GM12878 (cell line): ENCODE measurements at regions of chr1 and their contacts with region 1.

Region 1: DNA sequence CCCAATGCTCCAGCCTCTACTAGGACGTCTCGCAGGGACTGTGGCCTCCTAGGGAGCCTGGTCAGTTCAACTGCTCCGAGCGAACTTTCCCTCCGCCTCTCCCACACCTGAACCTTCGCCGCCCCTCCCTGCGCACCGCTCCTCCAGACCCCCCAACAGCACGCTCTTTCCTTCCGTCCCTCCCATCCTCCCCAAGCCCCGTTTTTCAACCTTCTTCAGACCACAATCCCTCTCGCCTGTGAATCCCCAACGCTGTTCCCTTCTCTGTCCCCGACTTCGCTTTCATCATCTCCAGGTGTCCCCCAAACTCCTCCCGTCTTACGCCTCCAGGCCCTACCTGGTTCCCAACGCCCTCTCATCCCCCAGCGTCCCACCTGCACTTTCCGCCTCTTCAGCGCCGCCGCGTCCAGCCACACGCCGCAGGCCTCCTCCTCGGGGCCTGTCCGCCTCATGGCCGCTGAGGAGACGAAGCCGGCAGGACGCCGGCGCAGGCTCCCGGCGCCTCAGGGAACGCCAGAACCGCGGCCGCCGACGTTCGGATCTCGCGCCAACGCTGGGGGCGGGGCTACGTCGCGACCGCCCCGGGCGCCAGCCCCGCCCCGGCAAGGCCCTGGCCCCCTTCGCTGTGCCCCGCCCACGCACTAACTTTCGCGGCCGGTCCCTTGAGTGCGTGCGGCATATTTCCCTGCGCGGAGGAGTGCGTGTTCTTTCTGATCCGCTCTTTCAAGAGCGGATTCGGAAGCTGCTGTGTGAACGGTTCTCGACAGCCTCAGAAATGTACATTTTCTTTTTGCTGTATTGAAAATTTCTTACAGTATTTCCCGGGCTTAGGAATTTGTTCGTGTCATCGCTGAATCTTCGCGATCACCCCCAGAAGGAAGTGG is at the start of gene AUNIP:
- DNase-seq: peak; percentile 56
- ATAC-seq: peak; percentile 92
- H3K4me3 ChIP-seq: peak within 1 kb of the TSS; percentile 88
- H3K27ac ChIP-seq: peak within 1 kb of the TSS; percentile 82
- H3K4me1 ChIP-seq: peaks cover 8% of the 10 kb centered on the region; the same call in 1 of the 2 replicates
- H3K27me3 ChIP-seq: no peaks in the 10 kb centered on the region
- CTCF ChIP-seq: no peak
- EP300 ChIP-seq: no peak
- POLR2A ChIP-seq: peak; percentile 85
- RAD21 ChIP-seq: no peak
- polyA plus RNA-seq, gene AUNIP: 3.9 to 6.9 TPM

Region 2: GRCh38 chr1:24930204-24931145 is 928.7 kb before region 1 on chr1 and contains the start of gene RUNX3:
- CTCF ChIA-PET with region 1: no interaction called
- POLR2A ChIA-PET with region 1: no interaction called
- RAD21 ChIA-PET with region 1: no interaction called
- SMC1A ChIA-PET with region 1: no interaction called
- in situ Hi-C with region 1: no loop called
- intact Hi-C with region 1: no loop called
- DNase-seq: peak; percentile 76
- ATAC-seq: peak; percentile 77
- H3K4me3 ChIP-seq: peak within 1 kb of the TSS; percentile 99
- H3K27ac ChIP-seq: peak within 1 kb of the TSS; percentile 89
- H3K4me1 ChIP-seq: peaks cover 40% of the 10 kb centered on the region
- H3K27me3 ChIP-seq: no peaks in the 10 kb centered on the region
- CTCF ChIP-seq: peak; percentile 14 to 45 (median 35); a peak in 3 of 6 replicates
- EP300 ChIP-seq: peak in 1 of 2 experiments; percentile 39; a peak in 1 of 4 replicates
- POLR2A ChIP-seq: peak; percentile 11; the same call in 1 of the 2 replicates
- RAD21 ChIP-seq: no peak
- polyA plus RNA-seq, gene RUNX3: 21.6 to 26.3 TPM

Region 3: DNA sequence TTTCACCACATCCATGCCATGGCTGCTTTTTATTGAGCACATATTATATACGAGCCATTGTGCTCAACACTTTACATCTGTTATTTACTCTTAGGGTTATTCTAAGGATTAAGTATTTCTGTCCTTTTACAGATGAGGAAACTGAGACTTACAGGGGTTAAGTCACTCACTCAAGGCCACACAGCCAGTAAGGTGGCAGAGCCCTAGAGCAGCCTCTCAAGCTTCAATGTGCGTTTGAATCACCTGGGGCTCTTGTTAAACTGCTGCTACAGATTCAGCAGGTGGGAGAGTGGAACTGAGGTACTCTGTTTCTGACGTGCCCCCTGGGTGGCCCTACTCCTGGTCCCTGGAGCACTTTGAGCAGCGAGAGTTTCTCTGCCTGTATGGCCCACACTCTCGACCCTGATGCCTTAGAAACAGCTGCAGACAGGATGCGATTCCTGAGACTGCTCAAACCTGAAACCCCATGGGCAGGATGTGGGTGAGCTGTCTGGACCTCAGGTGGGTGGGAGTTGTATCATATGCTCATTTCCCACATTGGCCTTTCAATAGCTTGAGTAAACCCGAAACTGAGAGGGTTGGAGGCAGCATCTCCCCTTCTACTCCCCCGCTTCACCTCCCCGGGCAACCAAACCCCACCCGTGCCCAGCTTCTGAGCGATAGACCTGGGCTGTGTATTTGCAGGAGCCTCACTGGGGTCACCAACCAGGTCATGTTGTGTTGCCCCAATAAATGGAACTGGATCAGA is 183.2 kb before region 1 on chr1:
- CTCF ChIA-PET with region 1: no interaction called
- POLR2A ChIA-PET with region 1: no interaction called
- RAD21 ChIA-PET with region 1: no interaction called
- SMC1A ChIA-PET with region 1: no interaction called
- in situ Hi-C with region 1: no loop called
- intact Hi-C with region 1: no loop called
- DNase-seq: peak; percentile 93
- ATAC-seq: peak; percentile 98
- H3K4me3 ChIP-seq: no peak overlapping the region
- H3K27ac ChIP-seq: no peak overlapping the region
- H3K4me1 ChIP-seq: peaks cover 21% of the 10 kb centered on the region
- H3K27me3 ChIP-seq: peaks cover 3 to 15% of the 10 kb centered on the region in 2 experiments
- CTCF ChIP-seq: no peak
- EP300 ChIP-seq: peak; percentile 93 to 97
- POLR2A ChIP-seq: no peak
- RAD21 ChIP-seq: no peak

Region 4: DNA sequence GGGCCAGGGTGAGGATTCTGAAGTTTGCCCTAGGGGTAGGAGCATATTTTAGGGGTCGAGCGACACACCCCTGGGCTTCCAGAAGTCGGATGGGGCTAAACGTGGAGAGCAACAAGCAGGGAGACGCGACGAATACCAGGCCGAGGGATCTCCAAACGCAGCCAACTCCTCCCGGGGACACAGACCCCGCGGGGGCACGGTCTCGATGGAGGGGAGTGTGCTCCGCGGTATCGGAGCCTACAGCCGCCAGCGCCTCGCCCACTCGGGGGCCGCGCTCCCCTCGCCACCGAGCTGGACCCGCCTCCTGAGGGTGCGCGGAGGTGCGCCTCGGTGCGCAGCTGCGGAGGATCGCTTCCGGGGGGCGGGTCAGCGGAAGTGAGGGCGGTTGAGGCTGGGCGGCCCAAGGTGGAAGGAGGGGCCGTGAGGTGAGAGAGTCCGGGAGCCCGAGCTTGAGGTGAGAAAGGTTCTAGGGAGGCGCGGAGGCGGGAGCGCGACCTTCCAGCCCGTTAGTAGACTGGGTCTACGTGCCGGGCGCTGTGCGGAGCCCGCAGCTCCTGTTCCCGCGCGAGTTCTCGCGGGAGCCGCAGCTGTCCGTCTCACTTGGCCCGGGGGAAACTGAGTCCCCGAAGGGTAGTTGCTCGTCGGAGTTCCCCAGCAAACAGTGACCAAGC is 39.4 kb before region 1 on chr1 and contains the start of gene MTFR1L:
- CTCF ChIA-PET with region 1: interaction called, 3 read pairs
- POLR2A ChIA-PET with region 1: no interaction called
- RAD21 ChIA-PET with region 1: no interaction called
- SMC1A ChIA-PET with region 1: no interaction called
- in situ Hi-C with region 1: no loop called
- intact Hi-C with region 1: loop called (anchors 5 kb)
- DNase-seq: peak; percentile 66
- ATAC-seq: peak; percentile 95
- H3K4me3 ChIP-seq: peak within 1 kb of the TSS; percentile 83
- H3K27ac ChIP-seq: peak within 1 kb of the TSS; percentile 73
- H3K4me1 ChIP-seq: peaks cover 15% of the 10 kb centered on the region
- H3K27me3 ChIP-seq: no peaks in the 10 kb centered on the region
- CTCF ChIP-seq: no peak
- EP300 ChIP-seq: no peak
- POLR2A ChIP-seq: peak; percentile 89
- RAD21 ChIP-seq: no peak
- polyA plus RNA-seq, gene MTFR1L: 26.7 to 30.0 TPM

Region 5: GRCh38 chr1:25844536-25845337 is 14.4 kb before region 1 on chr1:
- CTCF ChIA-PET with region 1: interaction called, 10 read pairs
- POLR2A ChIA-PET with region 1: interaction called, 7 read pairs
- RAD21 ChIA-PET with region 1: no interaction called
- SMC1A ChIA-PET with region 1: interaction called, 8 read pairs
- in situ Hi-C with region 1: no loop called
- intact Hi-C with region 1: no loop called
- DNase-seq: no peak
- ATAC-seq: peak; percentile 95
- H3K4me3 ChIP-seq: no peak overlapping the region
- H3K27ac ChIP-seq: peak overlapping the region; percentile 29
- H3K4me1 ChIP-seq: peaks cover 8% of the 10 kb centered on the region; the same call in 1 of the 2 replicates
- H3K27me3 ChIP-seq: no peaks in the 10 kb centered on the region
- CTCF ChIP-seq: no peak
- EP300 ChIP-seq: no peak
- POLR2A ChIP-seq: no peak
- RAD21 ChIP-seq: no peak

Region 6: DNA sequence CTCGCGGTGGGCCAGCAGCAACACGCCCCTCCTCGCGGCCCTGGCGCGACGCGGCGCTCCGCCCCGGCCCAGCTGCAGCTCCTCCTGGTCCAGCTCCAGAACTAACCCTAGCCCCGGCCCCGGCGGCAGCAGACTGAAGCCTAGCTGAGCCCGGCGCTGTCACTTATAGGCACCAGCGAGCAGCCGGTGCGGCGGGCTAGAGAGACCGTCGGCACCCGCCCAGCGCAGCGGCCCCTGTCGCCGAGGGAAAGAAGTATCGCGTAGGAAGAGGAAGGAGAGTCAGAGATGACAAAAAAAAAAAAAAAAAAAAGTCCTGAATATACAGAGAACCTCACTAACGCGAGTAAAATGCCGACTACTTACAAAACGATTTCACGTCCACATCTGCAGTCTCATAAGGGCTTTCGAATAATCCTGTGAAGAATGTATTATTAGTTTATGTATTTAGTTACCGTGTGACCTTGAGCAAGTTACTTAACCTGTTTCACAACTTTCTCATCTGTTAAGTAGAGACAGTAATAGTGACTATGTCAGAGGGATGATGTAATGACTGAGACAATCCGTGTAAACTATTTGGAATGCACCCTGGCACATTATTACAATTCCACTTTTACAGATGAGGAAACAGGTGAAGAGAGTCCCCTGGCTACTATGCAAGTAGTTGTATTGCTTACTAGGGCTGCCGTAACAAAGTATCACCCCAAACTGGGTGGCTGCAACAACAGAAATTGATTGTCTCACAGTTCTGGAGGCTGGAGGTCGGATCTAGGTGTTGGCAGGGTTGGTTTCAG is 1296.0 kb after region 1 on chr1 and contains the start of gene SLC9A1:
- CTCF ChIA-PET with region 1: no interaction called
- POLR2A ChIA-PET with region 1: no interaction called
- RAD21 ChIA-PET with region 1: no interaction called
- SMC1A ChIA-PET with region 1: no interaction called
- in situ Hi-C with region 1: no loop called
- intact Hi-C with region 1: loop called (anchors 10 kb)
- DNase-seq: peak; percentile 75
- ATAC-seq: peak; percentile 89
- H3K4me3 ChIP-seq: peak within 1 kb of the TSS; percentile 82
- H3K27ac ChIP-seq: peak within 1 kb of the TSS; percentile 79
- H3K4me1 ChIP-seq: peaks cover 21% of the 10 kb centered on the region
- H3K27me3 ChIP-seq: no peaks in the 10 kb centered on the region
- CTCF ChIP-seq: peak; percentile 82 to 96 (median 92)
- EP300 ChIP-seq: 0 out of 4 replicates have a peak, but pooled peaks of 1 of the 2 experiments have one; percentile 41
- POLR2A ChIP-seq: peak; percentile 99
- RAD21 ChIP-seq: peak; percentile 35; the same call in 1 of the 2 replicates
- polyA plus RNA-seq, gene SLC9A1: 0.87 to 1.1 TPM